ENCODE measurements at regions of chr4 and their contacts with region 1.

Region 1: DNA sequence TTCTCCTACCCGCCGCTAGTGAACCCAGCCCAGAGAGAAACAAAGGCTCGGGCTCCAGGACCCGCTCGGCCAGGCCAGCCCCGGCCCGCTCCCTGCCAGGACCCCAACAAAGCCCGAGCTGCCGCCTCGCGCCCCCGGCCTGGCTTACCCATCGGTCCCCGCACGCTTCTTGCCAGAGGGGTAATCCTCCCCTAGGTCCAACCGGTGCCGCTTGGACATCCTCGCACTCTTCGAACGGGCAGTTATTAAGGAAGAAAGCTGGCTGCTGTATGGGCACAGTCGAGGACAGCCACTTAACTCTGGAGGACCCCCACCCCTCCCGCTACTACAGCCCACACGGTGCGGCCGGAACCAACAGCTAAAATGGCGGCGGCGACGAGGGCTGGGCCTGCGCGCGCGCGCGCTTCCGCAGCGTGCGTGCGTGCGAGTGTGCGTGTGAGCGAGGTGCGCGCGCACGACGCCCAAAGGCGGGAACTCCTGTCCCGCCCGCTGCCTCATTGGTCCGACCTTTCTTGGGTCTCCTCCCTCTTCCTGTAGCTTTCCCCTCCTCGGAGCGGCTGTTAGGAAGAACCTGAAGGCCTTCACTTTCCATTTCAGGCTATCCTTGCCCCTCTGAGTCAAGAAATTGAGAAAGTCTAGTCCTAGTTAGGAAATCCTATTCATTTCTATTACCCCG is at the start of gene DHX15:
- DNase-seq: peak; percentile 87 to 93 (median 91)
- ATAC-seq: peak; percentile 98
- H3K4me3 ChIP-seq: peak within 1 kb of the TSS; percentile 94
- H3K4me3 Mint-ChIP-seq: peak within 1 kb of the TSS; percentile 89 to 100 (median 98)
- H3K27ac ChIP-seq: peak within 1 kb of the TSS; percentile 94
- H3K27ac Mint-ChIP-seq: peak within 1 kb of the TSS; percentile 88 to 99 (median 97)
- H3K4me1 ChIP-seq: peaks cover 24 to 32% of the 10 kb centered on the region in 2 donors
- H3K4me1 Mint-ChIP-seq: peaks cover 28 to 50% (median 39%) of the 10 kb centered on the region in 7 donors
- H3K27me3 ChIP-seq: no peaks in the 10 kb centered on the region
- H3K27me3 Mint-ChIP-seq: no peaks in the 10 kb centered on the region
- total RNA-seq, gene DHX15: 137 to 186 (median 139) TPM

Region 2: GRCh38 chr4:24472514-24473308 is 111.6 kb before region 1 on chr4:
- CTCF ChIA-PET with region 1: no interaction called
- POLR2A ChIA-PET with region 1: no interaction called
- intact Hi-C with region 1: loop called (anchors 1 kb)
- DNase-seq: peak; percentile 35 to 65 (median 59)
- ATAC-seq: peak; percentile 84
- H3K4me3 ChIP-seq: peak overlapping the region; percentile 29
- H3K4me3 Mint-ChIP-seq: peak overlapping the region; percentile 88 to 97 (median 94)
- H3K27ac ChIP-seq: no peak overlapping the region
- H3K27ac Mint-ChIP-seq: peak overlapping the region in 7 of 9 donors; percentile 79 to 94 (median 85)
- H3K4me1 ChIP-seq: peaks cover 0 to 6% of the 10 kb centered on the region in 2 donors
- H3K4me1 Mint-ChIP-seq: peaks cover 23 to 42% (median 33%) of the 10 kb centered on the region in 7 donors
- H3K27me3 ChIP-seq: peaks cover 0 to 21% of the 10 kb centered on the region in 2 donors
- H3K27me3 Mint-ChIP-seq: peaks cover 56 to 85% (median 78%) of the 10 kb centered on the region in 5 donors

Region 3: GRCh38 chr4:24557026-24558025 is 27.0 kb before region 1 on chr4:
- CTCF ChIA-PET with region 1: no interaction called
- POLR2A ChIA-PET with region 1: interaction called, 5 read pairs
- intact Hi-C with region 1: loop called in 1 of 2 experiments (anchors 2 kb)
- DNase-seq: peak in 5 of 9 donors; percentile 2 to 22 (median 14)
- ATAC-seq: peak; percentile 63
- H3K4me3 ChIP-seq: no peak overlapping the region
- H3K4me3 Mint-ChIP-seq: peak overlapping the region; percentile 16 to 74 (median 65)
- H3K27ac ChIP-seq: peak overlapping the region; percentile 5
- H3K27ac Mint-ChIP-seq: peak overlapping the region in 8 of 9 donors; percentile 3 to 77 (median 28)
- H3K4me1 ChIP-seq: peaks cover 9 to 13% of the 10 kb centered on the region in 2 donors
- H3K4me1 Mint-ChIP-seq: peaks cover 31 to 80% (median 69%) of the 10 kb centered on the region in 7 donors
- H3K27me3 ChIP-seq: no peaks in the 10 kb centered on the region
- H3K27me3 Mint-ChIP-seq: no peaks in the 10 kb centered on the region

Region 4: DNA sequence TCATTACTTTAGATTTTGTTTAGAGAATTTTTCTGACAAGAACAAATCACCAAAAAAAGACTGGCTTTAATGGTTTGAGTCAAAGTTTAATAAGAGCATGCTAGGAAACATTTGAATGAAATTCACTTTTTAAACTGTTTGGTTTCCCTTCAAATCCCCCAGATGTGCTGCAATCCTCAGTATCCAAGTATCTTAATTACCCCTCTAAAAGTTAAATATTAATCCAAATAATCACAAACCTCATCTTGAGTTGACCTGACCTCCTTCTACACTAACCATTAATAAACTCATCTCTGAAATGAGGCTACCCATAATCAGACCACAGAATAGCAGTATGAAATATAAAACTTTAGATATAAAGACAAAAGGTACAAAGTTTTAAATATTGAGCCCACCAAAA is 10.1 kb before region 1 on chr4:
- CTCF ChIA-PET with region 1: no interaction called
- POLR2A ChIA-PET with region 1: interaction called, 14 read pairs
- intact Hi-C with region 1: no loop called
- DNase-seq: no peak
- ATAC-seq: no peak
- H3K4me3 ChIP-seq: no peak overlapping the region
- H3K4me3 Mint-ChIP-seq: peak overlapping the region in 6 of 10 donors; percentile 31 to 55 (median 48)
- H3K27ac ChIP-seq: no peak overlapping the region
- H3K27ac Mint-ChIP-seq: peak overlapping the region in 4 of 9 donors; percentile 3 to 73 (median 50)
- H3K4me1 ChIP-seq: peaks cover 26 to 32% of the 10 kb centered on the region in 2 donors
- H3K4me1 Mint-ChIP-seq: peaks cover 49 to 91% (median 86%) of the 10 kb centered on the region in 7 donors
- H3K27me3 ChIP-seq: no peaks in the 10 kb centered on the region
- H3K27me3 Mint-ChIP-seq: no peaks in the 10 kb centered on the region

Region 5: GRCh38 chr4:24896977-24897376 is 312.7 kb after region 1 on chr4:
- CTCF ChIA-PET with region 1: no interaction called
- POLR2A ChIA-PET with region 1: no interaction called
- intact Hi-C with region 1: no loop called
- DNase-seq: no peak
- ATAC-seq: no peak
- H3K4me3 ChIP-seq: no peak overlapping the region
- H3K4me3 Mint-ChIP-seq: no peak overlapping the region
- H3K27ac ChIP-seq: no peak overlapping the region
- H3K27ac Mint-ChIP-seq: no peak overlapping the region
- H3K4me1 ChIP-seq: no peaks in the 10 kb centered on the region
- H3K4me1 Mint-ChIP-seq: no peaks in the 10 kb centered on the region
- H3K27me3 ChIP-seq: no peaks in the 10 kb centered on the region
- H3K27me3 Mint-ChIP-seq: peaks cover 0 to 3% (median 0%) of the 10 kb centered on the region in 5 donors

Region 6: GRCh38 chr4:25234390-25235370 is 650.4 kb after region 1 on chr4:
- CTCF ChIA-PET with region 1: no interaction called
- POLR2A ChIA-PET with region 1: no interaction called
- intact Hi-C with region 1: loop called (anchors 1 to 2 kb)
- DNase-seq: peak; percentile 20 to 76 (median 64)
- ATAC-seq: peak; percentile 70
- H3K4me3 ChIP-seq: peak overlapping the region; percentile 80
- H3K4me3 Mint-ChIP-seq: peak overlapping the region; percentile 86 to 99 (median 94)
- H3K27ac ChIP-seq: peak overlapping the region; percentile 89
- H3K27ac Mint-ChIP-seq: peak overlapping the region; percentile 89 to 98 (median 95)
- H3K4me1 ChIP-seq: peaks cover 16 to 29% of the 10 kb centered on the region in 2 donors
- H3K4me1 Mint-ChIP-seq: peaks cover 16 to 57% (median 44%) of the 10 kb centered on the region in 7 donors
- H3K27me3 ChIP-seq: no peaks in the 10 kb centered on the region
- H3K27me3 Mint-ChIP-seq: no peaks in the 10 kb centered on the region

Region 7: GRCh38 chr4:25376754-25377571 is 792.6 kb after region 1 on chr4 and contains the start of gene ANAPC4:
- CTCF ChIA-PET with region 1: interaction called, 3 read pairs
- POLR2A ChIA-PET with region 1: interaction called, 5 read pairs
- intact Hi-C with region 1: loop called in 1 of 2 experiments (anchors 1 kb)
- DNase-seq: peak; percentile 85 to 97 (median 92)
- ATAC-seq: peak; percentile 97
- H3K4me3 ChIP-seq: peak within 1 kb of the TSS; percentile 96
- H3K4me3 Mint-ChIP-seq: peak within 1 kb of the TSS in 2 of 10 donors; percentile 78 to 83
- H3K27ac ChIP-seq: peak within 1 kb of the TSS; percentile 76
- H3K27ac Mint-ChIP-seq: peak within 1 kb of the TSS in 7 of 9 donors; percentile 64 to 93 (median 83)
- H3K4me1 ChIP-seq: peaks cover 11 to 17% of the 10 kb centered on the region in 2 donors
- H3K4me1 Mint-ChIP-seq: peaks cover 0 to 18% (median 13%) of the 10 kb centered on the region in 7 donors
- H3K27me3 ChIP-seq: no peaks in the 10 kb centered on the region
- H3K27me3 Mint-ChIP-seq: no peaks in the 10 kb centered on the region
- total RNA-seq, gene ANAPC4: 40.6 to 55.3 (median 50.4) TPM

Region 8: GRCh38 chr4:26583865-26584652 is 1999.7 kb after region 1 on chr4 and contains the start of gene TBC1D19:
- CTCF ChIA-PET with region 1: no interaction called
- POLR2A ChIA-PET with region 1: no interaction called
- intact Hi-C with region 1: loop called in 1 of 2 experiments (anchors 5 kb)
- DNase-seq: peak; percentile 77 to 92 (median 87)
- ATAC-seq: peak; percentile 96
- H3K4me3 ChIP-seq: peak within 1 kb of the TSS; percentile 83
- H3K4me3 Mint-ChIP-seq: peak within 1 kb of the TSS; percentile 86 to 98 (median 95)
- H3K27ac ChIP-seq: peak within 1 kb of the TSS; percentile 92
- H3K27ac Mint-ChIP-seq: peak within 1 kb of the TSS; percentile 96 to 100 (median 98)
- H3K4me1 ChIP-seq: peaks cover 10 to 11% of the 10 kb centered on the region in 2 donors
- H3K4me1 Mint-ChIP-seq: peaks cover 10 to 51% (median 28%) of the 10 kb centered on the region in 7 donors
- H3K27me3 ChIP-seq: no peaks in the 10 kb centered on the region
- H3K27me3 Mint-ChIP-seq: peaks cover 0 to 5% (median 0%) of the 10 kb centered on the region in 5 donors
- total RNA-seq, gene TBC1D19: 4.9 to 8.7 (median 6.4) TPM

Measured in naive thymus-derived CD4-positive, alpha-beta T cell (primary cell).